ENCODE measurements at regions of chrX and their contacts with region 1.

Region 1: DNA sequence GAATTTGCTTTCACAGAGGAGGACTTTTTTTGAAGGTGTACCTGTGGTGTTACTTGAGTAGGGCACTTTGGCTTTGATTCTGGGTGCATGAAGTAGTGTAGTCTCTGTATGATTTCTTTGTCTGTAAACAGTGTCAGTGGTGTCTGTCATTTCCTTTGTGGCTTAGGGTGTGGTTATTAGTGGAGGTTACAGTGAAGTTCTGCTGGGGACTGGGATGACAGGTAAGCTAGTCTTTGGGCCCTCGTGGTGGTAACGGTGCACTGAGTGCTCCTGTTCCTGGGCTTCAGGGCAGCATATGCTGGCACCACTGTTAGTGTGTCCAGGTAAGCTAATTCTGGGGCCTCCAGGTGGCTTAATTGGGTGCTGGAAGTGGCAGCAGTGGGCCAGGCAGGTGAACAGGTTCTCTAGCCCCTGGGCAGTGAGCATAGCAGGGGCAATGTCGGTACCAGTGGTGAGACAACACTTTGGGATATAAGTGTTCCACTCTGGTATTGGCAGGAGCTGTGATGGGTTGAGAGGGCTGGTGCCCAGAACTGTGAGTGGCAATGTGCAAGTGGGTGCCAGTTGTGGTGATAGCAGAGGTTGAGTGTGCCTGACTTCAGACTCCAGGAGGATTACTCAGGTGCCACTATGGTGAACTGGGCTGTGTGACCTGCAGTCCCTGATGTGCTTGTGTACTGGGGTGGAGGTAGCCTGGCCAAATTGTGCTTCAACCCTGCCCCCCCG is 26.0 kb upstream of the VSIG1 start:
- DNase-seq: no peak
- ATAC-seq: no peak
- H3K4me3 ChIP-seq: no peak overlapping the region
- H3K27ac ChIP-seq: no peak overlapping the region
- H3K4me1 ChIP-seq: no peaks in the 10 kb centered on the region
- H3K27me3 ChIP-seq: peaks cover 0 to 9% (median 0%) of the 10 kb centered on the region in 4 donors
- CTCF ChIP-seq: no peak

Region 2: DNA sequence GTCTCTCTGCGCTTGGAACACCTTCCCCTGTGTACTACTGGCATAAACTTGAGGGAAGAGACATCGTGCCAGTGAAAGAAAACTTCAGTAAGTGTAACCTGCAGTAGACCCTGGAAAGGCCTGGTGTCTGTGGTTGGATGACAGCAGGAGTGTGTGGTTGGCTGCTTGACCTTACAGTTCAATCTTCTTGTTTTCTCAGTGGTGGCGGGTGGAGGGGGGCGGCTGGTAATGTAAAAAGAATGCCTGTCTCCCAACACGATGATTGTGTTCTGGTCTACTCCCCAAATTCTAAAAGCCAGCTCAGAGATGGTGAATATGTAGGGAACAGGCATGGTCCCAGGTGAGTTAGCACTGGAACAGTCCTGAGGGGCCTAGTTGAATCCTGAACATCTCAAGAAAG is 53.9 kb after region 1 on chrX:
- intact Hi-C with region 1: loop called in 1 of 3 experiments (anchors 2 kb)
- DNase-seq: no peak
- ATAC-seq: no peak
- H3K4me3 ChIP-seq: no peak overlapping the region
- H3K27ac ChIP-seq: no peak overlapping the region
- H3K4me1 ChIP-seq: no peaks in the 10 kb centered on the region
- H3K27me3 ChIP-seq: peaks cover 0 to 11% (median 0%) of the 10 kb centered on the region in 4 donors
- CTCF ChIP-seq: no peak

Region 3: GRCh38 chrX:108186811-108187210 is 168.0 kb after region 1 on chrX:
- intact Hi-C with region 1: no loop called
- DNase-seq: no peak
- ATAC-seq: no peak
- H3K4me3 ChIP-seq: no peak overlapping the region
- H3K27ac ChIP-seq: no peak overlapping the region
- H3K4me1 ChIP-seq: no peaks in the 10 kb centered on the region
- H3K27me3 ChIP-seq: peaks cover 0 to 2% (median 0%) of the 10 kb centered on the region in 4 donors
- CTCF ChIP-seq: no peak